ENCODE measurements at regions of chr16 and their contacts with region 1.

Region 1: GRCh38 chr16:23182460-23183309 is at the start of gene SCNN1G:
- DNase-seq: peak; percentile 71
- ATAC-seq: peak; percentile 97 to 98
- total RNA-seq, gene SCNN1G: 0.13 TPM in 1 of 2 donors, not detected in the other

Region 2: DNA sequence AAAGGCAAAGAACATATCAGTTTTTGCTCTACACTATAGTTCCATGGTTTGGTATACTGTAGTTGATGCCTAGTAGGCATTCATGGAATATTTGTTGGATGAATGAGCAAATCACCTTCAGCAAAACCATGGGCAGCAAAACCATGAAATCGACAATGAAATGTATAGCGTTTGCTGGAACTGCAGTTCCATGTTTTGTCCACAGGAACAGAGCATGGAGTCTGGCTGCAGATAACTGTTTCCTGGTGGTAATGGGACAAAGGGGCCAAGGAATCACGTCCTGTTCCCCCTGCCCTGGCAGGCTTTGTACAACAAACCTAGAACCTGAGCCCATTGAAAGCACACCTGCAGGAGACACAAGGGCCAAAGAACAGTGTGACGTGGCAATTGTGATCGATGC is 134.5 kb before region 1 on chr16:
- intact Hi-C with region 1: no loop called
- DNase-seq: no peak
- ATAC-seq: no peak

Region 3: GRCh38 chr16:23254338-23254737 is 71.7 kb after region 1 on chr16:
- intact Hi-C with region 1: no loop called
- DNase-seq: no peak
- ATAC-seq: no peak

Region 4: DNA sequence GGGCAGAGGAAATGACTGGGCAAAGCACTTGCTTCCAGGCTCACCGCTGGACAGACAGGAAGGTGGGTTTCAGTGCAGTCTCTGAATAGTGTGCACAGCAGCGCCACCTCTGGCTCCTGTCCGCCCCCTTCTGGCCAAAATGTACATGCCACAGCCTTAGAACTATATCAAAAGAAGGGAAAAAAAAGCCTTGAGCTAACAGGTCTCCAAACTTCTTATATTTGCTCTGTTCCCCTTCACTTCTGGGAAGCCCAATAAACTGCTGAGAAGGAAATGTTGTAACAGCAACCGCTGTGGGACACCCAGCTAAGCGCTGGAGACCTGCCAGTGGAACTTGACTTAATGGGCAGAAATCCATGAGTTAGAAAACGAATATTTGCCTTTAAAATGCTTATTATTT is 252.8 kb after region 1 on chr16:
- intact Hi-C with region 1: loop called (anchors 1 to 2 kb)
- DNase-seq: peak; percentile 64
- ATAC-seq: peak; percentile 63 to 83